ENCODE measurements at regions of chr17 and their contacts with region 1.

Region 1: GRCh38 chr17:79850571-79851461 is 11.6 kb upstream of the CBX4 start:
- DNase-seq: peak; percentile 43 to 52 (median 49)
- ATAC-seq: peak; percentile 10; the same call in 2 of the 3 replicates
- H3K4me3 ChIP-seq: no peak overlapping the region
- H3K27ac ChIP-seq: no peak overlapping the region
- H3K4me1 ChIP-seq: peaks cover 12 to 21% of the 10 kb centered on the region in 2 experiments
- H3K27me3 ChIP-seq: peaks cover 0 to 16% of the 10 kb centered on the region in 2 experiments; a peak in 3 of 5 replicates
- CTCF ChIP-seq: no peak
- EP300 ChIP-seq: no peak
- POLR2A ChIP-seq: no peak
- RAD21 ChIP-seq: no peak

Region 2: DNA sequence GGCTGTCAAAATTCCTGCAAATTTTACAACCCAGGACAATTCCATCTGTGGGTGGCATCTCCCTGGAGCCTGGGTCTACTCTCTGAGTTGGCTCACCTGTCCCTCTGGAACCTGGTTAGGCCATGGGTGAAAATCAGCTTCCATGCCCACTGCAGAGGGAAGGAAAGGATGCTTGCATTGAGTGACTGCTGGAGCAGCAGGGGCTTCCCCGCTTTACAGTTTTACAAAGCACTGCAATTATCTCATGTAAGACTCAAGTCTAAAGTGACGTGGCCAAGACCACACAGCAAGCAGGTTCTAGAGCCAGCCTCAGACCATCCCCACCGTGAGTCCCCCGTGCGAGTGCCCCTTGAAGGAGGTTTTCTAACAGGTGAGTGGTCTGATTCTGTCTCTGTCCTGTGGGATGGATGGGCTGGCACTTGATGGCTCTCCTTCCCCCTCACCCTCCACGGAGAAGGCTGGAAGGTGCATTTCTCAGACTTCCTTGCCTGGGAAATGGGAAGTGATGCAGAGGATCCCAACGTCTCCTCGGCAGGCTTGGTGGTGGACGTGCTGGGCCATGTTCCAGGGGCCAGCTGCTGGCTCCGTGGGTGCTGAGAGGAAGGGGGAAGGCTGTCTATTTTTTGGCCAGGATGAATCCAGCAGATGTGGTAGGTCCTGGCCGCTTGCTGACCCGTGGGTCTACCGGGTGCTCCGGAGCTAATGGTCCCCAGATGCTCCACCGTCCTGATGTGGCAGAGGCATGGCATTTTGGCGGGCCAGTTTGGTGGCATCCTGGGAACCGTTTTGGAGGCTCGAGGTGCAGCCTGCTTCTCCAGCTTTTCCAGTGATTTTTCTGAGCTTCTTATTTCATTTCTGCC is 14.8 kb after region 1 on chr17:
- CTCF ChIA-PET with region 1: no interaction called
- POLR2A ChIA-PET with region 1: interaction called, 14 read pairs
- in situ Hi-C with region 1: no loop called
- intact Hi-C with region 1: no loop called
- DNase-seq: no peak
- ATAC-seq: no peak
- H3K4me3 ChIP-seq: no peak overlapping the region
- H3K27ac ChIP-seq: no peak overlapping the region
- H3K4me1 ChIP-seq: peaks cover 0 to 11% of the 10 kb centered on the region in 2 experiments; a peak in 2 of 5 replicates
- H3K27me3 ChIP-seq: peaks cover 39 to 62% of the 10 kb centered on the region in 2 experiments; a peak in 4 of 5 replicates
- CTCF ChIP-seq: no peak
- EP300 ChIP-seq: no peak
- POLR2A ChIP-seq: no peak
- RAD21 ChIP-seq: no peak

Region 3: GRCh38 chr17:79970576-79971068 is 119.8 kb after region 1 on chr17:
- CTCF ChIA-PET with region 1: no interaction called
- POLR2A ChIA-PET with region 1: no interaction called
- in situ Hi-C with region 1: no loop called
- intact Hi-C with region 1: loop called (anchors 10 kb)
- DNase-seq: peak in 2 of 4 experiments; percentile 48 to 72
- ATAC-seq: peak; percentile 76
- H3K4me3 ChIP-seq: no peak overlapping the region
- H3K27ac ChIP-seq: no peak overlapping the region
- H3K4me1 ChIP-seq: peaks cover 0 to 2% of the 10 kb centered on the region in 2 experiments; a peak in 1 of 5 replicates
- H3K27me3 ChIP-seq: peaks cover 30 to 48% of the 10 kb centered on the region in 2 experiments
- CTCF ChIP-seq: peak; percentile 72 to 75 (median 74)
- EP300 ChIP-seq: no peak
- POLR2A ChIP-seq: no peak
- RAD21 ChIP-seq: peak in 1 of 2 experiments; percentile 40; a peak in 2 of 4 replicates